GM18951 (cell line): ENCODE measurements at regions of chr7 and their contacts with region 1.

Region 1: GRCh38 chr7:91843831-91844230 is 36.7 kb downstream of the MTERF1 start:
- POLR2A ChIP-seq: no peak

Region 2: GRCh38 chr7:92447345-92448204 is 603.7 kb after region 1 on chr7 and contains the start of gene GATAD1:
- in situ Hi-C with region 1: loop called (anchors 25 kb)
- POLR2A ChIP-seq: peak; percentile 71

Region 3: DNA sequence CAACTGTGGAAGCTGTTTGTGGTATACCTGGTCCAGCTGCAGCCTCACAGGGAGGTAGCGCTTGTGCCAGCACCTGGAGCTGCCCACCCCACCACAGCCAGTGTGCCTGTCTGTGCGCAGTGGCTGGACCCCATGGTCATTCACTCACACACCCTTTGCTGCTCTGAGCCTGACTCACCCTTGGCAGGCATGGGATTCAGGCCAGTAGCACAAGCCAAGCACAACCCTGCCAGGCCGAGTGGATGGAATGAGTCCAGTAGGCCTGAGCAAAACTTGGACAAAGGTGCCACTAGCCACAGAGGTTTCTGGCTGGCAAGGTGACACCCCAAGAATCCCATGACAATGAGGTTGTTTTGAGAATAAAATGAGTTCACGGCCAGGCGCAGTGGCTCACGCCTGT is 703.7 kb after region 1 on chr7:
- in situ Hi-C with region 1: no loop called
- POLR2A ChIP-seq: no peak